WTC11 (cell line): ENCODE measurements at regions of chr7 and their contacts with region 1.

Region 1: DNA sequence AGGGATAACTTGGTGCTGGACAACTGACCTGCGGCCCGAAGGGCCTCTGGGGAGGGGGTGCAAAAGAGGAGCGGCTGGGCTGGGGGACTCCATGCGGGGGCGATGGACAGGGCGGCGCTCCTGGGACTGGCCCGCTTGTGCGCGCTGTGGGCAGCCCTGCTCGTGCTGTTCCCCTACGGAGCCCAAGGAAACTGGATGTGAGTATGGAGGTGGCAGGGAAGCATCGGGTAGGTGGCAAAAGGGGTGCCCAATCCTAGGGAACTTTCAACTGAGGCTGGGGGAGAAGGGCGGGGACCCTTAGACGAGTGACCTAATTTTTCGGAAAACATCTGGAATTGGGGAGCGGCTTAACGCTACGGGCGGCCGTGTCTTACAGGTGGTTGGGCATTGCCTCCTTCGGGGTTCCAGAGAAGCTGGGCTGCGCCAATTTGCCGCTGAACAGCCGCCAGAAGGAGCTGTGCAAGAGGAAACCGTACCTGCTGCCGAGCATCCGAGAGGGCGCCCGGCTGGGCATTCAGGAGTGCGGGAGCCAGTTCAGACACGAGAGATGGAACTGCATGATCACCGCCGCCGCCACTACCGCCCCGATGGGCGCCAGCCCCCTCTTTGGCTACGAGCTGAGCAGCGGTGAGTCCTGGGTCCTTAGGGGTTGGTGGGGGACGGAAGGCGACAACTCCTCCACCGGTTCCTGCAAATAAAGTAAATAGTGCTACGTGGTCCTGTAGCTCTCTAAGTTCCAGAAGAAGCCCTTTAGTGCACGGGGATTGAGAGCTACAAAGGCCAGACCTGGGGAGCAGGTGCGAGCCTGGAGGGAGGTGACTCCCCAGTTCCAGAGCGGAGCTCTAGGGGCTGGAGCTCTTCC is 622 bp downstream of the WNT16 start:
- DNase-seq: peak; percentile 71
- ATAC-seq: peak; percentile 73
- H3K4me3 Mint-ChIP-seq: peak overlapping the region; percentile 79
- H3K27ac Mint-ChIP-seq: no peak overlapping the region
- H3K4me1 Mint-ChIP-seq: peaks cover 13% of the 10 kb centered on the region
- H3K27me3 Mint-ChIP-seq: peaks cover 51% of the 10 kb centered on the region
- CTCF ChIP-seq: no peak

Region 2: DNA sequence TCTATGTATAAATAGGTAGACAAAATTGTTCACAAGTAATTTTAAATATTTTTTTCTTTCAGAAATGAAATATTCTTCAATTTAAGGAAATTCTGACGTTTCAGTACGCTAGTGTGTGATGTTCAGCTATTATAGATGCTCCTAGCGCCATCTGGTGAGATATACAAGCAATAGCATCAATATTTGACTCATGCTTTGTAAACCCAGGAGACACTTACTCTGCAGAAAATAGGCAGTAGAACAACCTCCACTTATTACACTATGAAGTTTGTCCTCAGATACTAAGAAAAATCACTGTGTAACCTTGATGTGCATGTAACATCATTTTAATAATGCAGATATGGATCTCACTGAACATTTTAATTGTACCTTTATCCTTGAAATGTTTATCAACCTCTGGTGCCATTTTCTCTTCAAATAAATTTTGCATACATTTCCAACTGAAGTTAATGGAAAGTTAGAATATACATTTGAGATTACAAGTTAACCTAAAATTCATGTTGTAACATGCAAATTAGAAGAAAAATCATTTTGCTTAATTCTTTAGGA is 218.2 kb after region 1 on chr7:
- CTCF ChIA-PET with region 1: interaction called, 10 read pairs
- POLR2A ChIA-PET with region 1: no interaction called
- DNase-seq: no peak
- ATAC-seq: peak; percentile 81
- H3K4me3 Mint-ChIP-seq: no peak overlapping the region
- H3K27ac Mint-ChIP-seq: no peak overlapping the region
- H3K4me1 Mint-ChIP-seq: peaks cover 4% of the 10 kb centered on the region
- H3K27me3 Mint-ChIP-seq: no peaks in the 10 kb centered on the region
- CTCF ChIP-seq: peak; percentile 39

Region 3: DNA sequence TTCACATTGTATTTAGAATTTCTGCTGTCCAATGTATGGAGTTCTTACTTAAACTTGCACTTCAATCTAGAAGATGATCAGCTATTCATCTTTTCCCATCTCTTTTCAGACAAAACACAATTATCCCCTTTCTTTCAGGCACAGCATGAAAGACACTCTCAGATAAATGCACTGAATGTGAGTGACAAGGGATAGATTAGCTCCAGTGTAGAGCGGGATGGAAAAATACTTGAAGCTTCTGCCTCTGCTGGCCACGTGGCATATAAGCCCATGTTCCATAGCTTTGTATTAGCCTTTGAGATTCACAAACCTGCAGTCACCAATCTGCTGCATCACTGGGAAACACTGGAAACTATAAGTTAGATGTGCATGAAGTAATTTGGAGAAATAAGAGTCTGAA is 228.9 kb after region 1 on chr7:
- CTCF ChIA-PET with region 1: interaction called, 10 read pairs
- POLR2A ChIA-PET with region 1: no interaction called
- DNase-seq: no peak
- ATAC-seq: peak; percentile 73
- H3K4me3 Mint-ChIP-seq: no peak overlapping the region
- H3K27ac Mint-ChIP-seq: no peak overlapping the region
- H3K4me1 Mint-ChIP-seq: peaks cover 15% of the 10 kb centered on the region; the same call in 1 of the 2 replicates
- H3K27me3 Mint-ChIP-seq: no peaks in the 10 kb centered on the region
- CTCF ChIP-seq: no peak